HEK293 (cell line): ENCODE measurements at regions of chr7 and their contacts with region 1.

Region 1: GRCh38 chr7:19224951-19225350 is 79.7 kb upstream of the FERD3L start:
- H3K4me3 ChIP-seq: no peak overlapping the region
- H3K27ac ChIP-seq: no peak overlapping the region
- H3K4me1 ChIP-seq: no peaks in the 10 kb centered on the region
- CTCF ChIP-seq: no peak

Region 2: GRCh38 chr7:19146699-19147098 is 78.3 kb before region 1 on chr7:
- CTCF ChIA-PET with region 1: no interaction called
- POLR2A ChIA-PET with region 1: no interaction called
- H3K4me3 ChIP-seq: no peak overlapping the region
- H3K27ac ChIP-seq: no peak overlapping the region
- H3K4me1 ChIP-seq: no peaks in the 10 kb centered on the region
- CTCF ChIP-seq: no peak

Region 3: DNA sequence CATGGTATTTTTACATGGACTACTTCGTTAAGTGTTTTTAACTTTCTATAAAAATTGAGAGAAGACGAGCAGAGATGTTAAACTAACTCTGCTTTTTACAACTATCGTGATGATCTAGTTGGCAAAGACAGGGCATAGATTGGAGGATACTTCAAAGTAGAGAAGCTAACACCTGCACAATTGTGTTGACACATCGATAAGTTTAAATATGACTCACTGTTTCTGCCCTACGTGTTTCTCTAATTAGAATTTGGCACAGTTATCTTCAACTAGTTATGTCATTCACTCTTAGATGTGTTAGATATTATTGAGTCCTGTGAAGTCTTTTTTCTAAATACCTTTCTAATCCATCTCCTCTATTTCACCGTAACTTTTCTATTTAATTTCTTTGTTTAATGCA is 11.2 kb before region 1 on chr7:
- CTCF ChIA-PET with region 1: no interaction called
- POLR2A ChIA-PET with region 1: no interaction called
- H3K4me3 ChIP-seq: no peak overlapping the region
- H3K27ac ChIP-seq: no peak overlapping the region
- H3K4me1 ChIP-seq: peaks cover 16% of the 10 kb centered on the region
- CTCF ChIP-seq: no peak

Region 4: GRCh38 chr7:19294619-19295018 is 69.7 kb after region 1 on chr7:
- CTCF ChIA-PET with region 1: interaction called, 10 read pairs
- POLR2A ChIA-PET with region 1: no interaction called
- H3K4me3 ChIP-seq: no peak overlapping the region
- H3K27ac ChIP-seq: no peak overlapping the region
- H3K4me1 ChIP-seq: peaks cover 10% of the 10 kb centered on the region
- CTCF ChIP-seq: no peak